Tibial artery (tissue), 4 donors: ENCODE measurements at regions of chr6 and their contacts with region 1.

Region 1: DNA sequence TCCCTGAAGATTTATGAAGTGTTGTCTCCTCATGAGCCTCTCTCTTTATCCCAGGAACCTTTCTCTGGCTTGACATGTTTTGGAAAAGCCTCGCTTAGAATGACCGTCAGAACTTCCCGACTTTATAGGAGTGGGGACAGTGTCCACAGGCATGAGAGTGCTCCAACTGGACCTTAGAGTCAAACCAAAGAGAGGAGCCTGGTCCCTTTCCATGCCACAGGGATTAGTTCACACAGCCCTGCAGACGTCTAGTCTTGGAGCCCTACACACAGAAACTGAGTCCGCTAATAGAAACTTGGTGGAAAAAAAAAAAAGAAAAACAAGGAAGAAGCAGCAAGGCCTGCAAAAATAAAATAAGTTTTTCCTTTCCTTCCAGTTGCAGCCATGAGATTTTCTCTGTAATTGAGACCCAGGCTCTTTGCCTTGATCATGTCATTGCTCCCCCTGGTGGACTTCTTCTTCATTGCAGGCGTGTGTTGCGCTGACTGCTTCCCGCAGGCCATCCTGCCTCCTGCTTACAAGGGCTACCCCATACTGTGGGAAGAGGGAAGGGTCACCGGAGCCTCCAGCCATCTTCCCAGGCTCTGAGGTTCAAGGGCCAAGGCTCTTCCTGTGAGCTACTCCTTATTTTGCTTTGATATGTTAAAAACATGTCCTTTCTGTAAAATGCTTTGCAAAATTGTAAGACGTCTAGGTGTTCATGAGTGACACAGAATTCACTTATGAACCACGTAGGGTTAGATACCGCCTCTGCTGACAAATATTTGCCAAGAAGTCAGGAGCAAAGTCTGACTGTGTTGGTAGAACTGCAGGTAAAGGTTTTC is 201.0 kb downstream of the UST start:
- DNase-seq: peak; percentile 89 to 90
- H3K4me3 ChIP-seq: no peak overlapping the region
- H3K27ac ChIP-seq: no peak overlapping the region
- H3K4me1 ChIP-seq: no peaks in the 10 kb centered on the region
- H3K27me3 ChIP-seq: no peaks in the 10 kb centered on the region
- CTCF ChIP-seq: peak; percentile 75 to 85

Region 2: DNA sequence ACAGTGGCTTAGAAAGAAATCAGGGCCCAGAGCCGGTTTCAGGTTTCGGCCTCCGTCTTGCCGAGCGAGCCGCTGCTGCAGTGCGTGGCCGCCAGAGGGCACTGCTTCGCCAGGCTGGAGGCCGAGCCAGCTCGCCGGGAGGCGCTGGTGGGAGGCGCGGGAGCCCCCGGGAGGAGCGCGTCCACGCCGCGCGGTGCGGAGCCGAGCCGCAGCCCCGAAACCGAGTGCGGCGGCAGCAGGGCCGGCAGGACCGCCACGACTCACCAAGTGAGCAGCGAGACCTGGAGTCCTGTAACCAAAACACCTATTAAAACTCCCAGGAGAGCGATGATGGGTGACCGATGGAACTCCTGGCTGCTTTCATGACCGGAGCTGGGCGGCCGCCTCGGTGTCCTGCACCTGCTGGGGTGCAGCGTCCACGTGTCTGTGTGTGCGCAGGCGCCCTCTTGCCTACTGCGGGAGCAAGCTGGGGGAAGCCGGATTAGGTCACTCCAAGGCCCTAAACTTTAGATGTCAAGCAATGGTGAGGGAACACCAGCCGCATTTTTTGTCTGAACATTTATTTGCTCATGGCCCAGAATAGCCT is 387.9 kb before region 1 on chr6:
- intact Hi-C with region 1: loop called (anchors 5 kb)
- DNase-seq: peak; percentile 65 to 84
- H3K4me3 ChIP-seq: peak overlapping the region; percentile 49 to 62
- H3K27ac ChIP-seq: peak overlapping the region in 1 of 2 donors; percentile 30
- H3K4me1 ChIP-seq: peaks cover 0 to 10% (median 6%) of the 10 kb centered on the region in 4 donors
- H3K27me3 ChIP-seq: no peaks in the 10 kb centered on the region
- CTCF ChIP-seq: peak; percentile 94 to 99

Region 3: GRCh38 chr6:148578245-148578732 is 369.5 kb before region 1 on chr6:
- intact Hi-C with region 1: loop called (anchors 2 kb)
- DNase-seq: peak; percentile 80 to 89
- H3K4me3 ChIP-seq: no peak overlapping the region
- H3K27ac ChIP-seq: no peak overlapping the region
- H3K4me1 ChIP-seq: no peaks in the 10 kb centered on the region
- H3K27me3 ChIP-seq: no peaks in the 10 kb centered on the region
- CTCF ChIP-seq: peak; percentile 82 to 91

Region 4: GRCh38 chr6:148746363-148747144 is 201.3 kb before region 1 on chr6 and contains the start of gene UST:
- intact Hi-C with region 1: loop called (anchors 10 kb)
- DNase-seq: peak; percentile 93 to 96
- H3K4me3 ChIP-seq: peak within 1 kb of the TSS; percentile 68 to 88
- H3K27ac ChIP-seq: peak within 1 kb of the TSS; percentile 85 to 87
- H3K4me1 ChIP-seq: peaks cover 0 to 25% (median 13%) of the 10 kb centered on the region in 4 donors
- H3K27me3 ChIP-seq: no peaks in the 10 kb centered on the region
- CTCF ChIP-seq: peak in 1 of 2 experiments; percentile 37

Region 5: DNA sequence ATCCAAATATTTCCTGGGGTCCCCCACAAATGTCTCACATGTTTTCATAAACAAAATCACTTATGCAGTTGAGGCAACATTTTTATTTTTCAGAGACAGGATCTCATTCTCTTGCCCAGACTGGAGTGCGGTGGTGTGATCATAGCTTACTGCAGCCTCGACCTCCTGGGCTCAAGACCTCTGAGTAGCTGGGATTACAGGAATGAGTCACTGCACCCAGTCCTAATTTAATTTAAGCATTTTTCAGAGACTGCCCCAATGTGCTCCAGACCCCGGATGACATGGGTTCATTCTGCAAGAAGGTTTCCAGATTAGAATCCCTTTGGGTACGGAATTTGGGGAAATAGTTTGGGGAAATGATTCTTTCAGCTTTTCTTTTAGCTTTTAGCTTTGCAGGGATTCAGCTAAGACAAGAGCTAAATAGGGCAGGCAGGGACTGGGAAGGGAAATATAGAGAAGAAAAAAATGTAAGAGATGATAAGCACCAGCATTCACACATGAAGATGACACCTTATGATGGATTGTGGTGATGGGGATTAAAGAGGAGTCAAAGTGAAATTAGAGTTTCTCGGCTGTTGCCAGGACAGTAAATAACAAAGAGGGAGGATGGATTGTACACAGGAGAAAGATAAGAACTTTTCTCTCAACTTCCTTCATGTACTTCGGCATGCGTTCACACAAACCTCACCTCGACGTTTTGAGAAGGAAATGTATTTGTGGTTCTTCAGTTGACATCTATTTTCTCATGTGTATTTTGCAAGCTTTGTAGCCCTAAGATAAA is 200.3 kb after region 1 on chr6:
- intact Hi-C with region 1: no loop called
- DNase-seq: no peak
- H3K4me3 ChIP-seq: no peak overlapping the region
- H3K27ac ChIP-seq: no peak overlapping the region
- H3K4me1 ChIP-seq: no peaks in the 10 kb centered on the region
- H3K27me3 ChIP-seq: no peaks in the 10 kb centered on the region
- CTCF ChIP-seq: no peak